ENCODE measurements at regions of chr3 and their contacts with region 1.

Region 1: GRCh38 chr3:129249276-129250065 is at the start of gene COPG1:
- DNase-seq: peak; percentile 81
- ATAC-seq: peak; percentile 87
- H3K4me3 ChIP-seq: peak within 1 kb of the TSS; percentile 72 to 99 (median 84)
- H3K27ac ChIP-seq: peak within 1 kb of the TSS; percentile 93
- H3K4me1 ChIP-seq: peaks cover 58% of the 10 kb centered on the region
- H3K27me3 ChIP-seq: no peaks in the 10 kb centered on the region; a peak in 1 of 5 replicates
- CTCF ChIP-seq: no peak
- EP300 ChIP-seq: no peak
- POLR2A ChIP-seq: peak; percentile 95
- RAD21 ChIP-seq: no peak; the same call in 1 of the 2 replicates
- total RNA-seq, gene COPG1: 166 and 201 TPM in 2 replicates

Region 2: DNA sequence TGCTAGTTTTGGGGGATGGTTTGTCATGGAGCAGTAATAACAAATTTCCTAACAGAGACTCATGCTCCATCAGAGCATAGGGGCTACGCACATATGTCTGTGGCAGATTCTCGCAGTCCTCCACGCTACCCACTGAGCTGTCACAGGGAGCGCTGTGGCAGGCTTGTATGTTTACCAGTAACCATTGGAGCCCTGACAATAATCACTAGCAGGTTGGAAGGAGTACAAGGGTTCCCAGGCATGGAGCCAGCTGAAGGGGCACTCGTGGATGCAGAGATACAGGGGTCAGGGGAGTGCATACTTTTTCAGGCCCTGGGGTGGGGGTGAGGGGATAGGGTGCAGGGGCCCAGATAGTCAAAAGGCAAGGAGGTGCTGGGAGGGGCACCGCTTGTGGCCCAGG is 196.8 kb before region 1 on chr3:
- CTCF ChIA-PET with region 1: interaction called, 20 read pairs
- POLR2A ChIA-PET with region 1: interaction called, 11 read pairs
- in situ Hi-C with region 1: no loop called
- intact Hi-C with region 1: loop called (anchors 1 kb)
- DNase-seq: no peak
- ATAC-seq: no peak
- H3K4me3 ChIP-seq: no peak overlapping the region
- H3K27ac ChIP-seq: no peak overlapping the region
- H3K4me1 ChIP-seq: peaks cover 52% of the 10 kb centered on the region
- H3K27me3 ChIP-seq: 0 out of 5 replicates have a peak, but pooled peaks cover 0 to 9% of the 10 kb centered on the region in 2 experiments
- CTCF ChIP-seq: no peak
- EP300 ChIP-seq: no peak
- POLR2A ChIP-seq: no peak
- RAD21 ChIP-seq: no peak

Region 3: DNA sequence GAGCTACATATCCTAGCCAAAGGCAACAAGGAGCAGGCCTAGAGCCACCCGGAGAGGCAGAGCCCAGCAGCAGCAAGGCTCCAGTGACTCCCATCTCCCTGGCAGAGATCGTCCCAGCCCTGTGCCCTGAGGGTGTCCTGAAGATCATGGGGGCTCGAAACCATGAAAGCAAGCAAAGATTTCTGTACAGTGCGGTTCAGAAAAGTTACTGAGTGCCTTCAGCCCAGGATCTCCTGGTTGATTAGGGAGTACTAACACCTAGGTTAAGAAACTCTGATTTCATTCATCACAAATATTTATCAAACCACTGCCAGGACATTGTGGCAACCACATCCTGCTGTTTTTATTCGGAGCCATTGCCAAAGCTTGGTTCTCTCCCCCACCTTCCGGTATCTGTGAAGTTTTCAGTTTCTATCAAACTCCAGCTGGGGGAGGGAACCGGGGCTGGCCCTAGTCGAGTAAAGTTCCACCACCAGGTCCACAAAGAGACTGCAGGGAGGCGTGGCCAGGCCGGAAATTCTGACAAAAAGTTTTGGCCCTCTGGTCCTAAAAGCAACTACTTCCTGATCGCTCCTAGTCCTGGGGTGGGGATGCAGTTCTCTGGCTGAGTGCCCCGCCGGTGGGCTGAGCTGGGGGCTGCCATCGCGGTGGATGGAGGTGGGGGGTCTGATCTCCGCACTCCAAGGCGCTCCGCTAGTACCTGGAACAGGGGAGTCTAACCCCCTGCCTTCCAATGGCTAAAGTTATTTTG is 129.0 kb before region 1 on chr3:
- CTCF ChIA-PET with region 1: no interaction called
- POLR2A ChIA-PET with region 1: interaction called, 22 read pairs
- in situ Hi-C with region 1: no loop called
- intact Hi-C with region 1: loop called (anchors 5 kb)
- DNase-seq: peak; percentile 90
- ATAC-seq: peak; percentile 31
- H3K4me3 ChIP-seq: peak overlapping the region; percentile 65 to 83 (median 81)
- H3K27ac ChIP-seq: peak overlapping the region; percentile 81
- H3K4me1 ChIP-seq: peaks cover 55% of the 10 kb centered on the region
- H3K27me3 ChIP-seq: no peaks in the 10 kb centered on the region; a peak in 1 of 5 replicates
- CTCF ChIP-seq: no peak; the same call in 1 of the 2 replicates
- EP300 ChIP-seq: peak in 1 of 2 experiments; percentile 26; a peak in 1 of 4 replicates
- POLR2A ChIP-seq: peak; percentile 49 to 63; a peak in 3 of 4 replicates
- RAD21 ChIP-seq: no peak

Region 4: GRCh38 chr3:129183569-129184395 is 65.7 kb before region 1 on chr3 and contains the start of gene CNBP:
- CTCF ChIA-PET with region 1: interaction called, 6 read pairs
- POLR2A ChIA-PET with region 1: interaction called, 13 read pairs
- in situ Hi-C with region 1: loop called (anchors 10 kb)
- intact Hi-C with region 1: loop called (anchors 1 kb)
- DNase-seq: peak; percentile 83
- ATAC-seq: peak; percentile 98
- H3K4me3 ChIP-seq: peak within 1 kb of the TSS; percentile 91 to 95 (median 95)
- H3K27ac ChIP-seq: peak within 1 kb of the TSS; percentile 99
- H3K4me1 ChIP-seq: peaks cover 40% of the 10 kb centered on the region
- H3K27me3 ChIP-seq: no peaks in the 10 kb centered on the region; a peak in 1 of 5 replicates
- CTCF ChIP-seq: no peak; the same call in 1 of the 2 replicates
- EP300 ChIP-seq: no peak; a peak in 1 of 4 replicates
- POLR2A ChIP-seq: peak; percentile 85 to 94
- RAD21 ChIP-seq: no peak; the same call in 1 of the 2 replicates
- total RNA-seq, gene CNBP: 354 and 539 TPM in 2 replicates

Region 5: DNA sequence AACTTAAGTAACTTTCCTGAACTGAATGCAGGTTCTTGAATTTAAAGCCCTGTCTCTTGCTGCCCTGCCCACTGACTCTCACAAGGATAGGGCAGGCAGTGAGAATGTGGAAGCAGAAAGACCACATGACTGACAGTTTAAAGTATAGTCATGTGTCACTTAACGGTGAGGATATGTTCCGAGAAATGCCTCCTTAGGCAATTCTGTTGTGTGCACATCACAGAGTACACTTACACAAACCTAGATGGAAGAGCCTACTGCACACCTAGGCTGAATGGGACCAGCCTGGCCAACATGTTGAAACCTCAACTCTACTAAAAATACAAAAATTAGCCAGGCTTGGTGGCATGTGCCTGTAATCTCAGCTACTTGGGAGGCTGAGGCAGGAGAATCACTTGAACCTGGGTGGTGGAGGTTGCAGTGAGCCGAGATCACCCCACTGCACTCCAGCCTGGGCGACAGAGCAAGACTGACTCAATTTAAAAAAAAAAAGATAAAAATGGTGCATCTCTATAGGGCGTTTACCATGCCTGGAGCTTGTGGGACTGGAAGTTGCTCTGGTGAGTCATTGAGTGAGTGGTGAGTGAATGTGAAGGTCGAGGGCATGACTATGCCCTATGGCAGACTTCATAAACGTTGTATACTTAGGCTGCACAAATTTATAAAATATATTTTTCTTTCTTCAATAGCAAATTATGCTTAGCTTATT is 19.0 kb before region 1 on chr3:
- CTCF ChIA-PET with region 1: interaction called, 14 read pairs
- POLR2A ChIA-PET with region 1: interaction called, 15 read pairs
- in situ Hi-C with region 1: no loop called
- intact Hi-C with region 1: loop called (anchors 2 kb)
- DNase-seq: peak; percentile 68
- ATAC-seq: peak; percentile 26; the same call in 2 of the 3 replicates
- H3K4me3 ChIP-seq: no peak overlapping the region
- H3K27ac ChIP-seq: no peak overlapping the region
- H3K4me1 ChIP-seq: peaks cover 58% of the 10 kb centered on the region
- H3K27me3 ChIP-seq: no peaks in the 10 kb centered on the region
- CTCF ChIP-seq: no peak
- EP300 ChIP-seq: no peak
- POLR2A ChIP-seq: no peak
- RAD21 ChIP-seq: no peak